ENCODE measurements at regions of chr1 and their contacts with region 1.

Region 1: GRCh38 chr1:30379684-30380624 is 343.4 kb downstream of the MATN1 start:
- DNase-seq: no peak
- ATAC-seq: peak; percentile 54 to 72
- H3K4me3 ChIP-seq: no peak overlapping the region
- H3K27ac ChIP-seq: no peak overlapping the region
- H3K4me1 ChIP-seq: no peaks in the 10 kb centered on the region
- H3K27me3 ChIP-seq: no peaks in the 10 kb centered on the region

Region 2: DNA sequence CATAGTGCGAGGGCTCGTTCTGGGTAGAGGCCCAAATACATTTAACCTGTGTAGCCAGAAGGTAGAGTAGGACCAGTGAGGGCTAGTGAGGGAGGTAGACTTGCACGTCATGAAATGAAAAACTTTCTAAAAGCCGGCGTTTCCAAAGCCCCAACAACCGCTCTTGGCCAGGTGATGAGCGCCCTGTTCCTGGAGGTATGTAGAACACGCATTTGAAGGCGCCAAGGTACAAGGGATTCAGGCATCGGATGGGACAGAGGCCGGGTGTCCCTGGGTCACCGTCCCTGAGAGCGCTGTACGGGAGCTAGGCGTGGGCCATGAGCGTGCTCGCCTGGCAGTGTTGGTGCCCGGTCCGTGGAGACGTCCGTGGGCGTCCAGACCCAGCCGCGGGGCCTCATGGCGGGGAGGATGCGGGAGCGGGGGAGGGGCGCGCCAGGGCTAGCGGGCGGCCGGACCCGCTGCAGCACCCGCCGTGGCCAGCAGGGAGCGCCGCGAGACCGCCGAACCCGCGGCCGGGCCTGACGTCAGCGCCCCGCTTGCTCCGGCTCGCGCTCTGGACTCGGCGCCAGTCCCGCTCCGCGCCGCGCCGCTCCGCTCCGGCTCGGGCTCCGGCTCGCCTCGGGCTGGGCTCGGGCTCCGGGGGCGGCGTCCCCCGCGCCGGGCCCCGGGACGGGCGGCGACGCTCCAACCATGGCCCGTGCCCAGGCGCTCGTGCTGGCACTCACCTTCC is 1143.8 kb before region 1 on chr1 and contains the start of gene PTPRU:
- intact Hi-C with region 1: loop called in 3 of 4 experiments (anchors 5 to 10 kb)
- DNase-seq: peak; percentile 78 to 92 (median 92)
- ATAC-seq: peak; percentile 77 to 80
- H3K4me3 ChIP-seq: peak within 1 kb of the TSS; percentile 65
- H3K27ac ChIP-seq: peak within 1 kb of the TSS; percentile 0
- H3K4me1 ChIP-seq: no peaks in the 10 kb centered on the region
- H3K27me3 ChIP-seq: no peaks in the 10 kb centered on the region
- total RNA-seq, gene PTPRU: 13.7 to 29.9 (median 22.9) TPM